Activated CD4-positive, alpha-beta T cell treated with anti-CD3 and anti-CD28 coated beads for 36 hours (primary cell): ENCODE measurements at regions of chr4 and their contacts with region 1.

Region 1: GRCh38 chr4:137853435-137853834 is 321.1 kb upstream of the PCDH18 start:
- DNase-seq: no peak
- ATAC-seq: no peak
- H3K4me3 Mint-ChIP-seq: no peak overlapping the region
- H3K27ac Mint-ChIP-seq: no peak overlapping the region
- H3K4me1 Mint-ChIP-seq: no peaks in the 10 kb centered on the region
- H3K27me3 Mint-ChIP-seq: no peaks in the 10 kb centered on the region

Region 2: GRCh38 chr4:137705171-137705783 is 148.2 kb before region 1 on chr4:
- CTCF ChIA-PET with region 1: no interaction called
- POLR2A ChIA-PET with region 1: no interaction called
- intact Hi-C with region 1: no loop called
- DNase-seq: no peak
- ATAC-seq: no peak
- H3K4me3 Mint-ChIP-seq: no peak overlapping the region
- H3K27ac Mint-ChIP-seq: no peak overlapping the region
- H3K4me1 Mint-ChIP-seq: no peaks in the 10 kb centered on the region
- H3K27me3 Mint-ChIP-seq: no peaks in the 10 kb centered on the region

Region 3: GRCh38 chr4:138405934-138406567 is 552.6 kb after region 1 on chr4:
- CTCF ChIA-PET with region 1: no interaction called
- POLR2A ChIA-PET with region 1: no interaction called
- intact Hi-C with region 1: loop called in 1 of 2 experiments (anchors 5 kb)
- DNase-seq: no peak
- ATAC-seq: no peak
- H3K4me3 Mint-ChIP-seq: no peak overlapping the region
- H3K27ac Mint-ChIP-seq: no peak overlapping the region
- H3K4me1 Mint-ChIP-seq: no peaks in the 10 kb centered on the region
- H3K27me3 Mint-ChIP-seq: no peaks in the 10 kb centered on the region